ENCODE measurements at regions of chr14 and their contacts with region 1.

Region 1: DNA sequence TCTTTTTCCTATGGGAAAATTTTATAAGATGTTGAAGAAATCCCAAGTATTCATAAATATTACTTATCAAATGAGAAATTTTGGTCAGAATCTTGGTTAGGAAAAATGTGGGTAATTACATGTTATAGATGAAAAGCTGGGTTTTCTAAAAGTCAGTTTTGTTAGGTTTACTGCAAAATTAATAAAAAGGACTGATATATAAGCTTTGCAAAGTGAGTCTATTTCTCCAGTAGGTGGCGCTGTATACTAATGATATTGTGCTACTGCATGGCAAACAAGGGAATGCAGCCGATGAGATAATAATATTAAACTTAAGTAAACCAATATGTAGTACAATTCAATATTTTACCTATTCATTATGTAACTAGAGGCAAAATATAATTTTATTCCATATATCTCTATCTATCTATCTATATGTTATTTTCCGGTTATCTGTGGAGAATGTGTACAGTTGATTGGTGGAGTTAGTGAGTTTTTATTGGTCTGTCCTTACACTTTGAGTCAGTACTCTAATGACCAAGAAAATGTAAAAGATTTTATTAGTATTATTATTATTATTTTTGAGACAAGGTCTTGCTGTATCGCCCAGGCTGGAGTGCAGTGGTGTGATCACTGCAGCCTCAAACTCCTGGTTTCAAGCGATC is 32.9 kb downstream of the MIPOL1 start:
- DNase-seq: peak in 1 of 35 experiments; percentile 45
- ATAC-seq: no peak
- H3K4me3 ChIP-seq: no peak overlapping the region
- H3K4me3 Mint-ChIP-seq: no peak overlapping the region
- H3K27ac ChIP-seq: no peak overlapping the region
- H3K27ac Mint-ChIP-seq: no peak overlapping the region
- H3K4me1 ChIP-seq: no peaks in the 10 kb centered on the region
- H3K4me1 Mint-ChIP-seq: no peaks in the 10 kb centered on the region
- H3K27me3 ChIP-seq: no peaks in the 10 kb centered on the region
- H3K27me3 Mint-ChIP-seq: no peaks in the 10 kb centered on the region

Region 2: GRCh38 chr14:36626151-36626550 is 604.5 kb before region 1 on chr14:
- CTCF ChIA-PET with region 1: no interaction called
- POLR2A ChIA-PET with region 1: interaction called in 1 of 2 experiments, 10 read pairs
- DNase-seq: no peak
- ATAC-seq: no peak
- H3K4me3 ChIP-seq: no peak overlapping the region
- H3K4me3 Mint-ChIP-seq: no peak overlapping the region
- H3K27ac ChIP-seq: no peak overlapping the region
- H3K27ac Mint-ChIP-seq: no peak overlapping the region
- H3K4me1 ChIP-seq: no peaks in the 10 kb centered on the region
- H3K4me1 Mint-ChIP-seq: no peaks in the 10 kb centered on the region
- H3K27me3 ChIP-seq: peaks cover 2 to 4% of the 10 kb centered on the region in 2 experiments
- H3K27me3 Mint-ChIP-seq: peaks cover 10 to 19% of the 10 kb centered on the region in 2 donors

Region 3: GRCh38 chr14:37197421-37198272 is 33.0 kb before region 1 on chr14 and contains the start of gene MIPOL1:
- CTCF ChIA-PET with region 1: no interaction called
- POLR2A ChIA-PET with region 1: no interaction called
- DNase-seq: peak in 2 of 35 experiments; percentile 2
- ATAC-seq: peak in 3 of 4 experiments; percentile 37 to 44 (median 43)
- H3K4me3 ChIP-seq: peak within 1 kb of the TSS in 1 of 2 donors; percentile 67
- H3K4me3 Mint-ChIP-seq: peak within 1 kb of the TSS; percentile 52 to 71 (median 53)
- H3K27ac ChIP-seq: no peak within 1 kb of the TSS
- H3K27ac Mint-ChIP-seq: no peak within 1 kb of the TSS
- H3K4me1 ChIP-seq: peaks cover 0 to 3% of the 10 kb centered on the region in 2 experiments
- H3K4me1 Mint-ChIP-seq: peaks cover 11 to 15% (median 15%) of the 10 kb centered on the region in 3 donors
- H3K27me3 ChIP-seq: peaks cover 0 to 4% of the 10 kb centered on the region in 2 experiments
- H3K27me3 Mint-ChIP-seq: peaks cover 16 to 17% of the 10 kb centered on the region in 2 donors
- total RNA-seq, gene MIPOL1: 0.20 to 0.49 (median 0.29) TPM in 4 of 5 donors, not detected in the other

Region 4: GRCh38 chr14:37472906-37473305 is 242.2 kb after region 1 on chr14:
- CTCF ChIA-PET with region 1: no interaction called
- POLR2A ChIA-PET with region 1: no interaction called
- DNase-seq: no peak
- ATAC-seq: no peak
- H3K4me3 ChIP-seq: no peak overlapping the region
- H3K4me3 Mint-ChIP-seq: no peak overlapping the region
- H3K27ac ChIP-seq: no peak overlapping the region
- H3K27ac Mint-ChIP-seq: no peak overlapping the region
- H3K4me1 ChIP-seq: no peaks in the 10 kb centered on the region
- H3K4me1 Mint-ChIP-seq: no peaks in the 10 kb centered on the region
- H3K27me3 ChIP-seq: no peaks in the 10 kb centered on the region
- H3K27me3 Mint-ChIP-seq: no peaks in the 10 kb centered on the region

Measured in T-cell (primary cell).